ENCODE measurements at regions of chr12 and their contacts with region 1.

Region 1: DNA sequence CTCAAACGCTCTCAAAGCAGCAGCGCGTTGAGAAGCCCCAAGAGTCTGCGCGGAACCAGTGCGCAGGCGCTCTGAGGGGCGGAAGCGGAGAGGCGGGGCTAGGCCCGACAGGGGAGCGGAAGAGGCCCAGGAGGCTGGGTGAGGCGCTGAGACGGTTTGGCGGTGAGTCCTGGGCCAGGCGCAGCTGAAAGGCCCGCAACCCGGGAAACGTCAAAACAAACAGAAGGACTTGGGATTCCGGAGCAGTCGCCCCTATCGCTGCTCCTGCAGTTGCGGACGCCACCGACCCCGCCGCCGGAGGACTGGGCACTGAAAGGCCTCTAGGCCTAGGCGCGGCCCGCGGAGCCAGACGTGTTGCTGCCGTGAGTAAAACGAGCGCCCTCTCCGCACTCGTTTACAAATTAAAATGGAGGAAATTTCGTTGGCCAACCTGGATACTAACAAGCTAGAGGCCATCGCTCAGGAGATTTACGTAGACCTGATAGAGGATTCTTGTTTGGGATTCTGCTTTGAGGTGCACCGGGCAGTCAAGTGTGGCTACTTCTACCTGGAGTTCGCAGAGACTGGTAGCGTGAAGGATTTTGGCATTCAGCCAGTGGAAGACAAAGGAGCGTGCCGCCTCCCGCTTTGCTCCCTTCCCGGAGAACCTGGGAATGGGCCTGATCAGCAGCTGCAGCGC is at the start of gene ATXN7L3B:
- DNase-seq: peak; percentile 95 to 98
- ATAC-seq: peak; percentile 95 to 99 (median 97)
- H3K4me3 ChIP-seq: peak within 1 kb of the TSS; percentile 87
- H3K4me3 Mint-ChIP-seq: peak within 1 kb of the TSS; percentile 98
- H3K27ac ChIP-seq: peak within 1 kb of the TSS; percentile 94
- H3K27ac Mint-ChIP-seq: peak within 1 kb of the TSS; percentile 99
- H3K4me1 ChIP-seq: peaks cover 27% of the 10 kb centered on the region
- H3K4me1 Mint-ChIP-seq: peaks cover 53 to 57% of the 10 kb centered on the region in 2 donors
- H3K27me3 ChIP-seq: no peaks in the 10 kb centered on the region
- H3K27me3 Mint-ChIP-seq: no peaks in the 10 kb centered on the region
- CTCF ChIP-seq: no peak
- total RNA-seq, gene ATXN7L3B: 49.0 to 61.4 (median 51.6) TPM

Region 2: GRCh38 chr12:74021937-74022336 is 515.9 kb before region 1 on chr12:
- intact Hi-C with region 1: loop called (anchors 5 kb)
- DNase-seq: peak in 1 of 2 donors; percentile 8
- ATAC-seq: peak in 1 of 3 donors; percentile 64
- H3K4me3 ChIP-seq: no peak overlapping the region
- H3K4me3 Mint-ChIP-seq: no peak overlapping the region
- H3K27ac ChIP-seq: no peak overlapping the region
- H3K27ac Mint-ChIP-seq: no peak overlapping the region
- H3K4me1 ChIP-seq: no peaks in the 10 kb centered on the region
- H3K4me1 Mint-ChIP-seq: no peaks in the 10 kb centered on the region
- H3K27me3 ChIP-seq: no peaks in the 10 kb centered on the region
- H3K27me3 Mint-ChIP-seq: no peaks in the 10 kb centered on the region
- CTCF ChIP-seq: no peak

Region 3: DNA sequence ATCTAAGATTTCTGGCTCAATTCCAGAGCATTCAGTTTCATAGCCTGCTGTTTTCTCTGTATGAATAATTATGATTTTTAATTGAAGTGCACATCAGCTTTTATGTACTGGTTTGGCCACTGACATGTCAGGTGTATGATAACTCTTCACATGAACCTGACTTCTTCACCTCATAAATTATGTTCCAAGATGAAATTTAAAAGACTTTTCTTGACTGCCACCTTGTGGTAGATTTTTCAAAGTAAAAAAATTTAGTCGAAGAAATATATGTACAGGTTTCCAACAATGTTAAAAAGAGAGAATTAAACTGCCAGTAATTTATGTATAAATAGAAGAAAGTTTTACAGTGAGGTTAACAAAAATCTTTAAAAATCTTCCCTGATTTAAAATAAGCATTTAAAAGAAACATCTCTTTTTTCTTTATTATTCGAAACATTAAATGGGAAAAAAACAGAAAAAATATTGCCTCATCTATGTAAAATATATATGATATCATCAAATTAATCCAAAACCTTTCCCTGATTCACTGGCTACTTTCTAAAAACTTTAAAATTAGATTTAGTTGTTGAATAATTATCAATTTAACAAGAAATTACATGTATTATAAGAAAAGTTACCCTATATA is 125.1 kb before region 1 on chr12:
- intact Hi-C with region 1: loop called (anchors 1 kb)
- DNase-seq: peak in 1 of 2 donors; percentile 5
- ATAC-seq: no peak
- H3K4me3 ChIP-seq: no peak overlapping the region
- H3K4me3 Mint-ChIP-seq: no peak overlapping the region
- H3K27ac ChIP-seq: no peak overlapping the region
- H3K27ac Mint-ChIP-seq: no peak overlapping the region
- H3K4me1 ChIP-seq: no peaks in the 10 kb centered on the region
- H3K4me1 Mint-ChIP-seq: no peaks in the 10 kb centered on the region
- H3K27me3 ChIP-seq: peaks cover 2% of the 10 kb centered on the region
- H3K27me3 Mint-ChIP-seq: peaks cover 8 to 36% of the 10 kb centered on the region in 2 donors
- CTCF ChIP-seq: peak; percentile 61

Region 4: DNA sequence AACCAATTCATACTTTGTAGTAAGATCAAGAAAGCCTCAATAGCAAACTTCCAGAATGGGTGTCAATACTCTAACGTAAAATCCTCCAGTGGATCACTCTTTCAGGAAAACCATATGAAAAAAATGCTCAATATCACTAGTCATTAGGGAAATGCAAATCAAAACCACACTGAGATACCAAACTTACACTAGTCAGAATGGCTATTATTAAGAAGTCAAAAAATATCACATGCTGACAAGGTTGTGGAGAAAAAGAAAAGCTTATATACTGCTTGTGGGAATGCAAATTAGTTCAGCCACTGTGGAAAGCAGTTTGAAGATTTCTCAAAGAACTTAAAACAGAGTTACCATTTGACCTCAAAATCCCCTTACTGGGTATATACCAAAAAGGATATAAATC is 49.7 kb before region 1 on chr12:
- intact Hi-C with region 1: loop called (anchors 10 kb)
- DNase-seq: no peak
- ATAC-seq: no peak
- H3K4me3 ChIP-seq: no peak overlapping the region
- H3K4me3 Mint-ChIP-seq: no peak overlapping the region
- H3K27ac ChIP-seq: no peak overlapping the region
- H3K27ac Mint-ChIP-seq: peak overlapping the region; percentile 78 to 81
- H3K4me1 ChIP-seq: peaks cover 7% of the 10 kb centered on the region
- H3K4me1 Mint-ChIP-seq: peaks cover 50 to 55% of the 10 kb centered on the region in 2 donors
- H3K27me3 ChIP-seq: no peaks in the 10 kb centered on the region
- H3K27me3 Mint-ChIP-seq: no peaks in the 10 kb centered on the region
- CTCF ChIP-seq: no peak

Measured in natural killer cell (primary cell).